IMR-90 (cell line): ENCODE measurements at regions of chr2 and their contacts with region 1.

Region 1: DNA sequence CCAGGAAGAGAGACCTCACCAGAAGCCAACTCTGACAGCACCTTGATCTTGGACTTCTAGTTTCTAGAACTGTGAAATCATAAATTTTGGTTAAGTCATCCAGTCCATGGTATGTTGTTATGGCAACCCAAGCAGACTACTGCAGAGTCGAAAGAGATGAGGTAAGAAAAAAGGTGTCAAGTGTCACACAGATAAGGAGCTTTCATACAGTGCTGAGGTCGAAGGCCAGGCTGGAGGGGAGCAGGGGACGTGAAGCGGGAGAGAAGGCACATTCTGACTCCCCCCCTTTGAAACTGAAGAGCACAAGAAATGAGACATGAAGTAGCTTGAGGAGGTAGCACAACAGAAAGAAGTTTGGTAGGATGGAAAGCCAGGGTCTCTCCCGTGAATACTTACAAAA is 110.4 kb downstream of the ALK start:
- DNase-seq: no peak
- ATAC-seq: no peak
- H3K4me3 ChIP-seq: no peak overlapping the region
- H3K27ac ChIP-seq: no peak overlapping the region
- H3K4me1 ChIP-seq: no peaks in the 10 kb centered on the region
- H3K27me3 ChIP-seq: peaks cover 13% of the 10 kb centered on the region; the same call in 1 of the 2 replicates
- CTCF ChIP-seq: no peak
- POLR2A ChIP-seq: no peak
- RAD21 ChIP-seq: no peak

Region 2: GRCh38 chr2:29627279-29627711 is 183.7 kb before region 1 on chr2:
- CTCF ChIA-PET with region 1: no interaction called
- POLR2A ChIA-PET with region 1: no interaction called
- dilution Hi-C with region 1: no loop called
- in situ Hi-C with region 1: no loop called
- intact Hi-C with region 1: no loop called
- DNase-seq: peak; percentile 91
- ATAC-seq: peak; percentile 61
- H3K4me3 ChIP-seq: no peak overlapping the region
- H3K27ac ChIP-seq: no peak overlapping the region; the same call in 1 of the 2 replicates
- H3K4me1 ChIP-seq: peaks cover 11% of the 10 kb centered on the region
- H3K27me3 ChIP-seq: no peaks in the 10 kb centered on the region
- CTCF ChIP-seq: no peak
- POLR2A ChIP-seq: no peak
- RAD21 ChIP-seq: no peak

Region 3: DNA sequence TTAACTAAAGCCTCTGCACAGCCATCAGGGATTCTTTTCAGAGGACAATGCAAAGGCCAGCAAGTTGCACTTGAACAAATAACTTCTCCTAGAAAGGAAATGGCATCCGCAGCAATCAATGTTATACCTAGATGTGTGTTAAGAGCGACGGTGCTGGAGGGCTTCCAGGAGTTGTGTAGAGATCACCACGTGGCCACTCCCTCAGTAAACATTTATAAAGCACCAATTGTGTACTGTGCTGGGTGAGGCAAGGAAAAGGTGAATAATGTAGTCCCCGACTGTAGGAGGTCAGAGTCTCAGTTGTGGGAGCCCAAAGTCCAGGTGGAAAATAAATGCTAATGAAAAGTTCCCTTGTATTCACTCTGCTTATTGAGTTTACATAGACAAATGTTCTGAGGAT is 24.6 kb before region 1 on chr2:
- CTCF ChIA-PET with region 1: no interaction called
- POLR2A ChIA-PET with region 1: no interaction called
- dilution Hi-C with region 1: no loop called
- in situ Hi-C with region 1: no loop called
- intact Hi-C with region 1: loop called (anchors 1 kb)
- DNase-seq: no peak
- ATAC-seq: no peak
- H3K4me3 ChIP-seq: no peak overlapping the region
- H3K27ac ChIP-seq: no peak overlapping the region
- H3K4me1 ChIP-seq: no peaks in the 10 kb centered on the region
- H3K27me3 ChIP-seq: peaks cover 6% of the 10 kb centered on the region; the same call in 1 of the 2 replicates
- CTCF ChIP-seq: no peak
- POLR2A ChIP-seq: no peak
- RAD21 ChIP-seq: no peak

Region 4: GRCh38 chr2:29834624-29835023 is 23.7 kb after region 1 on chr2:
- CTCF ChIA-PET with region 1: no interaction called
- POLR2A ChIA-PET with region 1: no interaction called
- dilution Hi-C with region 1: no loop called
- in situ Hi-C with region 1: no loop called
- intact Hi-C with region 1: loop called (anchors 1 kb)
- DNase-seq: no peak
- ATAC-seq: no peak
- H3K4me3 ChIP-seq: no peak overlapping the region
- H3K27ac ChIP-seq: no peak overlapping the region
- H3K4me1 ChIP-seq: no peaks in the 10 kb centered on the region
- H3K27me3 ChIP-seq: no peaks in the 10 kb centered on the region
- CTCF ChIP-seq: no peak
- POLR2A ChIP-seq: no peak
- RAD21 ChIP-seq: no peak